ENCODE measurements at regions of chr1 and their contacts with region 1.

Region 1: GRCh38 chr1:160681067-160681890 is 30.3 kb downstream of the CD48 start:
- DNase-seq: peak; percentile 95
- H3K4me3 Mint-ChIP-seq: no peak overlapping the region
- H3K27ac Mint-ChIP-seq: peak overlapping the region; percentile 77
- H3K4me1 Mint-ChIP-seq: peaks cover 82% of the 10 kb centered on the region
- H3K27me3 Mint-ChIP-seq: no peaks in the 10 kb centered on the region

Region 2: GRCh38 chr1:160575112-160575664 is 106.1 kb before region 1 on chr1:
- intact Hi-C with region 1: no loop called
- DNase-seq: peak; percentile 72
- H3K4me3 Mint-ChIP-seq: peak overlapping the region; percentile 88
- H3K27ac Mint-ChIP-seq: peak overlapping the region; percentile 92
- H3K4me1 Mint-ChIP-seq: peaks cover 86% of the 10 kb centered on the region
- H3K27me3 Mint-ChIP-seq: no peaks in the 10 kb centered on the region

Region 3: GRCh38 chr1:160618763-160619274 is 62.5 kb before region 1 on chr1:
- intact Hi-C with region 1: no loop called
- DNase-seq: peak; percentile 78
- H3K4me3 Mint-ChIP-seq: peak overlapping the region; percentile 10
- H3K27ac Mint-ChIP-seq: peak overlapping the region; percentile 74
- H3K4me1 Mint-ChIP-seq: peaks cover 56% of the 10 kb centered on the region
- H3K27me3 Mint-ChIP-seq: no peaks in the 10 kb centered on the region

Region 4: GRCh38 chr1:160711602-160712311 is 30.5 kb after region 1 on chr1 and contains the start of gene CD48:
- intact Hi-C with region 1: loop called (anchors 1 kb)
- DNase-seq: peak; percentile 85
- H3K4me3 Mint-ChIP-seq: no peak within 1 kb of the TSS
- H3K27ac Mint-ChIP-seq: no peak within 1 kb of the TSS
- H3K4me1 Mint-ChIP-seq: peaks cover 26% of the 10 kb centered on the region
- H3K27me3 Mint-ChIP-seq: no peaks in the 10 kb centered on the region
- total RNA-seq, gene CD48: 206 and 208 TPM in 2 replicates

Region 5: DNA sequence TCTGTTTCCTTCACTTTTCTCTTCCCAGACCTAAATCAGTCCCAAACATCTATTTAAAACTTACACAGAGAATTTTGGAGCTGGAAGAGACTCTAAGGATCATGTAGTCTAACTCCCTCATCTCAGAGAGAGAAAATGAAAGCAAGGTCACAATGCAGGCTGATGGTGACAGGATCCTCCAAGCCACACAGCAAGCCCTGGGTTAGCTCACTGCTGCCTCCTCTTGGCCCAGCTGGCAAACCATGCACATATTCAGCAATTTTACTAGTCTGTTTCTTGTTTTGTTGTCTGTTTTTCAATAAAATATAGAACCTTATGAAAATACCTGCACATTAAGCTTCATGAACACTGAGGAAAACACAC is 87.0 kb after region 1 on chr1:
- intact Hi-C with region 1: loop called (anchors 1 kb)
- DNase-seq: peak; percentile 95
- H3K4me3 Mint-ChIP-seq: peak overlapping the region; percentile 88
- H3K27ac Mint-ChIP-seq: peak overlapping the region; percentile 98
- H3K4me1 Mint-ChIP-seq: peaks cover 33% of the 10 kb centered on the region
- H3K27me3 Mint-ChIP-seq: peaks cover 2% of the 10 kb centered on the region

Region 6: DNA sequence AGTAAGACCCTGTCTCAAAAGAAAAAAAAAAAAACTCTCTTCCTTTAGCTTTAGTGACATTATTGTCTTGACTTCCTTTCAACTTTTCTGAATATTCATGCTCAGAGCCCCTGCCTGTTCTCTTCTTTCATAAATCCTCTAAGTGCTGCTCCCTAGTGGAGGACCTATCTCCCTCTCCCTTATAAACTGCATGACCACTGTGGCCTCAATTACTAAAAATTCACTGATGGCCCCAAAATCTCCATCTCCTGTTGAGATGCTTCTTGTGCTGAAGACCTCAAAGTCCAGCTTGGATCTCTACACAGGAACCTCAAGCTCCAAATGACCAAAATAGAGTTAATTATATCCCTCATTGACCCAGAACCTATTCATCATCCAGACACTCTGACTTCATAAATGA is 195.9 kb after region 1 on chr1:
- intact Hi-C with region 1: loop called (anchors 5 kb)
- DNase-seq: peak; percentile 71
- H3K4me3 Mint-ChIP-seq: no peak overlapping the region
- H3K27ac Mint-ChIP-seq: no peak overlapping the region
- H3K4me1 Mint-ChIP-seq: peaks cover 15% of the 10 kb centered on the region
- H3K27me3 Mint-ChIP-seq: peaks cover 7% of the 10 kb centered on the region

Measured in activated CD4-positive, alpha-beta T cell treated with anti-CD3 and anti-CD28 coated beads, Interleukin-2, amount 10 ng/mL, durations not matched to agents 24 days and 14 days (primary cell).